Endothelial cell of umbilical vein (primary cell): ENCODE measurements at regions of chr5 and their contacts with region 1.

Region 1: DNA sequence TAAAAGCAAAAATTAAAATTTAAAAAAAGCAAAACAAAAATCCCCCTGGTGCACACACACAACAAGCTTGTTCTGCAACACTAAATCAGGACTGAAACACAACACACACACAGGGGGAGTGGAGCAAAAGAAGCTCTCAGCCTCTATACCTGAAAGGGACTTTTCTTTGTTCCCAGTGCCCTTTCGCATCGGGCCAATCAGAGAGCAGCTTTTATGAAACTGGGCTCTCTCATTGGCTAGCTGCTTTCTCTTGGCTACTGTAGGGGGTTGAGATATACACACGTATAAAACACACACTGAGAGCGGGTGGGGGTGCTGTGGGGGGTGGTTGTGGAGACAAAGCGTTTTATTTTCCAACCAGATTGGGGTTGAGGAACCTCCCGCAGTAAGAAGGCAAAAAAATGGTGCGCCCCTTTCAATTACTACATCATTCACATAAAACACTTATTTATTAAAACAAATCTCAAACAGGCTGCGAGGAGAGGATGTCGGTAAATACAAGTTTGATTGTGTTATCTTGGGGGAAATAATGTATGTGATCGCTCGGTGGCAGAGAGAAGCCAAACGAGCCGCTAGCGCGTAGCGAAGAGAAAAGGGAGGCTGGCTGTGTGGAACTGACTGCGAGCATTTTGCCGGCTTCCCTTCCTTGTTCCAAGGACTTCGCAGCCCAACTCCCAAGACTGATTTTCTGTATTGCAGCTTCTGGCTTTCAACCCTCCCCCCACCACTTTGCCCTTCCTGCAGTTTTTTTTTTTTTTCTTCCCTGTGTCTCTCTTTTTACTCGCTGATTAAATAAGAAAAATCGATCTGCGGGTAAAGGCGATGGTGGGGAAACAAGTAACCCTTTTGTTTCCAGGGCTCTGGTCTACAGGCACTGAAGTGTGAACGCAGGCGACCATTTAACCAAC is 2.5 kb upstream of the ZNF608 start:
- DNase-seq: peak; percentile 97
- H3K4me3 ChIP-seq: peak overlapping the region; percentile 65 to 89 (median 88)
- H3K27ac ChIP-seq: peak overlapping the region; percentile 98
- H3K4me1 ChIP-seq: peaks cover 20% of the 10 kb centered on the region
- H3K27me3 ChIP-seq: no peaks in the 10 kb centered on the region
- CTCF ChIP-seq: no peak
- POLR2A ChIP-seq: no peak

Region 2: DNA sequence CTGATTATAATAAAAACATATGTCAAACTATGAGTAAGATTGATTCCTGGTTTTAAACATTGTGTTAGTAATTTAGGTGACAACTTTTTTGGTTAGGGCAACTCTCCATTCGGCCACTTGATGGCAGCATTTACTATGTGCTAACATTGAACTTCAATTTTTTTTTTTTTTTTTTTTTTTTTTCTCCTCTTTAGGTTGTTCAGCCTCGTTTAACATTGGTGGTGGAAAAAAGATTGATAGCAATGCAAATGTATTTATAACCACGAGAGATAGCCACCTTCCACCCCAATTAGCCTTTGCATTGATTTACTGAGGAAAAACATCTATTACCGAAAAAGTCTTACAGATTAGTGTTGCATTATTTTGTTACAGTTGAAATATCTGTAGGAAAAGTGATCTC is 1077.9 kb before region 1 on chr5:
- CTCF ChIA-PET with region 1: interaction called, 16 read pairs
- POLR2A ChIA-PET with region 1: no interaction called
- dilution Hi-C with region 1: no loop called
- intact Hi-C with region 1: loop called (anchors 2 kb)
- DNase-seq: peak; percentile 68
- H3K4me3 ChIP-seq: no peak overlapping the region
- H3K27ac ChIP-seq: no peak overlapping the region
- H3K4me1 ChIP-seq: no peaks in the 10 kb centered on the region
- H3K27me3 ChIP-seq: no peaks in the 10 kb centered on the region
- CTCF ChIP-seq: peak; percentile 52 to 57
- POLR2A ChIP-seq: no peak

Region 3: DNA sequence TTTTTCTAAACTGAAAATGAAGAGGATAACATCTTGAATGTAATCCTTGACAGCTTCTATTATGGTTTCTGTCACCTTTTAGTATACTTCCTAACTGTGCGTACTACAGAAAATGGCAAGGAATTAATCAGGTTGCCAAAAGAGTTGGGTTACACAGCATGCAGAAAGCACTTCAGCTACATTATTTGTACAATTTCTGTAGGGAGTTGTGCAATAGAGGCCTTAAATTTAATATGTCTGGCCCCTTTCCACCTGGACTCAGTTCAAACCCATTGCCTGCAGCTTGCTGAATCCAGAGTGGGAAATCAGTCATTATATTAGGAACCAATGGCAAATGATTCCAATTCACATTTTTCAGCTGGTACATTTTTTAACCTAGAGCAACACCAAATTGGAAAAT is 687.3 kb before region 1 on chr5:
- CTCF ChIA-PET with region 1: no interaction called
- POLR2A ChIA-PET with region 1: no interaction called
- dilution Hi-C with region 1: no loop called
- intact Hi-C with region 1: loop called (anchors 2 kb)
- DNase-seq: no peak
- H3K4me3 ChIP-seq: no peak overlapping the region
- H3K27ac ChIP-seq: no peak overlapping the region
- H3K4me1 ChIP-seq: peaks cover 15% of the 10 kb centered on the region
- H3K27me3 ChIP-seq: no peaks in the 10 kb centered on the region
- CTCF ChIP-seq: no peak
- POLR2A ChIP-seq: no peak

Region 4: DNA sequence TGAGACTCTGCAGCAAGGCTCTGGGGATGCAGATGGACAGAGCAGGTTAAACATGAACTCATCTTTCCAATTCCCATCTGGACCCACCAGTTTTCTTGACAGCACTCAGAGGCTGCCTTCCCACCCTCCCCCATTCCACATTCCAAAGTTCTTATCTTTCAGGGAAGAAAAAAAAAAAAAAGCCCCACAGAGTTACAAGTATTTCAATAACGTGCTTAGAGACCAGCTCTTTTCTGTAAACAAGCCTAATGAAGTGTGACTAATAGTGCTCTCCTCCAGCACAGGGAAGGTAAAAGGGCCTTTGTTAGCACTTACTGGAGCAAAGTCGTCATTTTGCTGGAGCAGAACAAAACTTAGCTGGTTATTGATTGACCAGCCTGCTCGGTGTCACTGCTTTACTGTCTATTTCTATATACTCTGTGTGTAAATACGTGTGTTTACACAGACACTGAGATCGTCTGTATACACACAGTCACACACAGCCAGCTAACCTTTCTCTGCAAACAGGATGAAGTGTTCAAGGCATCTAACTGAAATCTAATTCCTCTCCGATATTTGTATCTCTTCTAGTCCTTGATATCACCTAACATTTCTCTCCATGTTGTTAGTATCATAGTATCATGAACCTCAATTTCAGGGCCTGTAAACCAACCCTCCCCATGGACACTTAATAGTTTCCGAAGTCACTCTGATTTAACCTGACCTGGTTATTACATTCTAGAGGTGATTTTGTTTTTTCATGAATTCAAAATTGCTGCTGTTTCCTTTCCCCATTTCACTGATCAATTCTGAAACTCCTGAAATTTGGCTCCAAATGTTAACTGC is 87.4 kb before region 1 on chr5:
- CTCF ChIA-PET with region 1: interaction called, 10 read pairs
- POLR2A ChIA-PET with region 1: interaction called, 5 read pairs
- dilution Hi-C with region 1: no loop called
- intact Hi-C with region 1: no loop called
- DNase-seq: peak; percentile 91
- H3K4me3 ChIP-seq: peak overlapping the region in 1 of 3 experiments; percentile 27
- H3K27ac ChIP-seq: peak overlapping the region; percentile 91
- H3K4me1 ChIP-seq: peaks cover 46% of the 10 kb centered on the region
- H3K27me3 ChIP-seq: no peaks in the 10 kb centered on the region
- CTCF ChIP-seq: no peak
- POLR2A ChIP-seq: peak; percentile 37

Region 5: GRCh38 chr5:124948062-124948753 is 199.3 kb after region 1 on chr5:
- CTCF ChIA-PET with region 1: no interaction called
- POLR2A ChIA-PET with region 1: no interaction called
- dilution Hi-C with region 1: no loop called
- intact Hi-C with region 1: loop called (anchors 1 kb)
- DNase-seq: peak; percentile 90
- H3K4me3 ChIP-seq: no peak overlapping the region
- H3K27ac ChIP-seq: no peak overlapping the region
- H3K4me1 ChIP-seq: peaks cover 9% of the 10 kb centered on the region
- H3K27me3 ChIP-seq: no peaks in the 10 kb centered on the region
- CTCF ChIP-seq: no peak
- POLR2A ChIP-seq: no peak

Region 6: DNA sequence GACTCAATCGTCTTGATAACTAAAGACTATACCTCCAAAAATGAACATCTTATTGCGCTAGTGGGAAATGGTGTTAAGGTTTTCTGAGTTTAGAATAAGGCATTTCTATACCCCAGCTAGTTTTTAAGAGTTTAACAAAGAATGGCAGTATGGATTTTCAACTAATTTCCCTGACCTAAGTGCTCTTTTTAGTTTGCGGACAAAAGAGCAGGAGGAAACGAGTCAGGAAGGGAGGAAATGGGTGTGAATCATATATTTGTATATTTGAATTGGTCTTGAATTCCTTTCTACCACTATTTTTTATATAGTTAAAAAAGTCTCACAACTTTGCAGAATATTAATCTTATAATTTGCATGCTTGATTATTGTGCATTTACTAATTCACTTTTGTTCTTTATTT is 513.8 kb after region 1 on chr5:
- CTCF ChIA-PET with region 1: no interaction called
- POLR2A ChIA-PET with region 1: no interaction called
- dilution Hi-C with region 1: no loop called
- intact Hi-C with region 1: loop called (anchors 1 kb)
- DNase-seq: peak; percentile 83
- H3K4me3 ChIP-seq: no peak overlapping the region
- H3K27ac ChIP-seq: peak overlapping the region; percentile 81
- H3K4me1 ChIP-seq: peaks cover 22% of the 10 kb centered on the region
- H3K27me3 ChIP-seq: no peaks in the 10 kb centered on the region
- CTCF ChIP-seq: no peak
- POLR2A ChIP-seq: no peak

Region 7: DNA sequence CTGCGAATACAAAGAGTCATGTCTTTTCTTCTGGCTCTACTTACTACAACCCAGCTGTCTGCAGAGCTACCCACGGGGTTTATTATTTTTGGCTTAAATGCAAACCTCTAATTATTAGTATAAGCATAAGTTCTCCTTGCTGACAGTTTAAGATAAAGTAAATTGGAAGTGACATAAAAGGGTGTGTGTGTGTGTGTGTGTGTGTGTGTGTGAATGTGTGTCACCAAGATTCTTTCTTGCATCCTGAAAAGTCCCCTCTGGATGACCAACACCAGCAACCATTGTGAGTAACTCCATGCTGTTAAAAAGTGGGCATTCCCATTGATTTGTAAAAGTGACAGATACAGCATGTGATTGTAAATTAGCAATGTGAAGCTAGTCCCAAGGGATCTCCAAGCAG is 801.3 kb after region 1 on chr5:
- CTCF ChIA-PET with region 1: no interaction called
- POLR2A ChIA-PET with region 1: no interaction called
- dilution Hi-C with region 1: no loop called
- intact Hi-C with region 1: loop called (anchors 1 kb)
- DNase-seq: peak; percentile 97
- H3K4me3 ChIP-seq: no peak overlapping the region
- H3K27ac ChIP-seq: peak overlapping the region; percentile 69
- H3K4me1 ChIP-seq: peaks cover 30% of the 10 kb centered on the region
- H3K27me3 ChIP-seq: no peaks in the 10 kb centered on the region
- CTCF ChIP-seq: no peak
- POLR2A ChIP-seq: peak; percentile 66